Endothelial cell of umbilical vein (primary cell): ENCODE measurements at regions of chr10 and their contacts with region 1.

Region 1: DNA sequence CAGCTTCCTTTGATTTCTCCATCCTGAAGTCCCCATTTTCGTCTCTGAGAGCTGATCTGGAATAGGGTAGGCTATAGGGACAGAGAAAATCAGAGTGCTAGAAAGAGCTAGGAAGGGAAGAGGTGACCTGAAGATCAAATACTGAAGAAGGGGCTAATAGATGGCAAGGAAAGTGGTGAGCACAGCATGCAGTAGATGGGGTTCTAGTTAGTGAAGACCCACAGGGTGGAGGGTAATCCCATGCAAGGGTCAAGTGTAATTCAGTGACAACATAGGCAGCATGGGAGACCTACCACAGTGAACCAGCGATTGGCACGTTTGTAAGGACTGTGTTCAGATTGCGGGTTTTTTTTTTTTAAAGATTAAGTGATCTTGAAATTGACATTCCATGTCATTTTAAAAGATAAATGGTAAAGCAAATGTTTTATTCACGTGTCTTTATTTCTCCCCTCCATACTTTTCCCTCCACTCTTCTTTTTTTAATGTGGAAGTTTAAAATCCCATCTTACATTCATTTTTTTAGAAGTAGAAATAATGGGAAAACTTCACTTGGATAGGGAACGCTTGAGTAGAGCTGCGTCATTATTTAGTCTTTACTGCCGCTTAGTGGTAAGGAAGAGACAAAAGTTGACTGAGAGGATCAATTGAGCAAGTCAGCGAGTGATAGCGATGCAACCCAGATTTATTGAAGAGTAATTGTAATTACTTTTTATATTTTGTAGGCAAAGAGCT is 21.0 kb upstream of the ABI1 start:
- DNase-seq: peak; percentile 65
- H3K4me3 ChIP-seq: no peak overlapping the region
- H3K27ac ChIP-seq: no peak overlapping the region
- H3K4me1 ChIP-seq: no peaks in the 10 kb centered on the region
- H3K27me3 ChIP-seq: peaks cover 5 to 9% of the 10 kb centered on the region in 2 experiments
- CTCF ChIP-seq: peak; percentile 52 to 61
- POLR2A ChIP-seq: no peak

Region 2: DNA sequence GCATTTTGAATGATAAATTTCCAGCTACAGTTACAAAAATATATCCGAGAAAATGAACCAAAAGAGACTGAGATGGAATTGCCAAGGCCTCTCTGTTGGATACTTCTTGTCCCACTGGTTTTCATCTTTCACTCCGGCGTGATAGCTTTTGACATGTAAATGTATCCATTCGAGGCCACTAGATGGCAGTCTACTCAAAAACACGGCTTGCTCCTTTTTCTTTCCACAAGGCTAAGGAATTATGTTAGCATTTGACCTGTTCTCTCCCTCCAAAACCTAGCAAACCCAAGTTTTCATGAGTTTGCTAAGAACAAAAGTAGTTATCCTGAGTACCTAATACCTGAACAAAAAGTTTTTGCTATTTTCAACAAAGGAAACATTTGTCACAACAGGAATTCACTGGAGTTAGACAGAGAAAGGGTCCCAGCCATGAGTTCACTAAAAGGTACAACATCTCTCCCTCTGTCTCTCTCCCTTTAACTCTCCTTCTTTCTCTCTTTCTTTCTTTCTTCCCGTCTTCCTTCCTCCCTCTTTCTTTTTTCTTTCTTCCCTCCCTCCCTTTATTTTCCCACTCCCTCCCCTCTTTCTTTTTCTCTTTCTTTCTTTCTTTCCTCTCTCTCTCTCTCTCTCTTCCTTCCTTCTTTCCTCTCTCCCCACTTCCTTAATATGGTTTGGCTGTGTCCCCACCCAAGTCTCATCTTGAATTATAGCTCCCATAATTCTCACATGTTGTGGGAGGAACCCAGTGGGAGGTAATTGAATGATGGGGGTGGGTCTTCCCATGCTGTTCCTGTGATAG is 1155.6 kb before region 1 on chr10:
- CTCF ChIA-PET with region 1: no interaction called
- POLR2A ChIA-PET with region 1: no interaction called
- dilution Hi-C with region 1: no loop called
- intact Hi-C with region 1: loop called (anchors 5 kb)
- DNase-seq: peak; percentile 42
- H3K4me3 ChIP-seq: no peak overlapping the region
- H3K27ac ChIP-seq: no peak overlapping the region
- H3K4me1 ChIP-seq: no peaks in the 10 kb centered on the region
- H3K27me3 ChIP-seq: no peaks in the 10 kb centered on the region
- CTCF ChIP-seq: peak; percentile 61 to 67
- POLR2A ChIP-seq: no peak

Region 3: DNA sequence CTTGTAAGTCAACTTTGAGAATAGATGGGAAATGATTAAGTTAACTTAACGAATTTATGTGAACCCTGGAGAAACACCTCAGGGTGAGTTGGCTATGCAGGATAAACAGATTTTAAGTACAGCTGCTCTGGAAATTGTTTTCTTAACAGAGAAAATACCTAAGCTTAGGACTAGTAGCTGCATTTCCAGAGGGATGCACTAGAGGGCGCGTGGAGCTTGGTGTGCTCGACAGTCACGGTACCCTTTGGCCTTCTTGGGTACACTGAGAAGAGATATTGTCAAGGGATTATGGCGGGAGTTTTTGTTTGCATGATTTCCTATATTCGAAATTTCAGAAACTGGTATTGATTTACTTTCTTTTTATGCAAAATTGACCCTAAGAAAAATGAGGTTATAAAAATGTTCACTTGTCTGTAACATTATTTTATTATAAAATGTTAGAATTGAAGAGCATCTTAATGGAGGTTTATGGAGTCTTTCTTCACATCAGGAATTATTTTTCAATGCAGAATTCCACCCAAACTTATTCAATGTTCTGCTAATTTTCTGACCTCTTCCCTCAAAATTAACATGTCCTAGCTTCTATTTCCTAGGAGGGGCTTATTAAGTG is 1006.1 kb before region 1 on chr10:
- CTCF ChIA-PET with region 1: interaction called, 20 read pairs
- POLR2A ChIA-PET with region 1: no interaction called
- dilution Hi-C with region 1: no loop called
- intact Hi-C with region 1: loop called (anchors 5 kb)
- DNase-seq: peak; percentile 47
- H3K4me3 ChIP-seq: no peak overlapping the region
- H3K27ac ChIP-seq: no peak overlapping the region
- H3K4me1 ChIP-seq: no peaks in the 10 kb centered on the region
- H3K27me3 ChIP-seq: no peaks in the 10 kb centered on the region
- CTCF ChIP-seq: peak; percentile 80 to 81
- POLR2A ChIP-seq: no peak

Region 4: GRCh38 chr10:26612151-26612915 is 269.4 kb before region 1 on chr10:
- CTCF ChIA-PET with region 1: interaction called, 38 read pairs
- POLR2A ChIA-PET with region 1: no interaction called
- dilution Hi-C with region 1: no loop called
- intact Hi-C with region 1: no loop called
- DNase-seq: no peak
- H3K4me3 ChIP-seq: no peak overlapping the region
- H3K27ac ChIP-seq: no peak overlapping the region
- H3K4me1 ChIP-seq: no peaks in the 10 kb centered on the region
- H3K27me3 ChIP-seq: no peaks in the 10 kb centered on the region
- CTCF ChIP-seq: no peak
- POLR2A ChIP-seq: no peak

Region 5: GRCh38 chr10:26682931-26683330 is 198.8 kb before region 1 on chr10:
- CTCF ChIA-PET with region 1: interaction called, 32 read pairs
- POLR2A ChIA-PET with region 1: no interaction called
- dilution Hi-C with region 1: no loop called
- intact Hi-C with region 1: loop called (anchors 1 kb)
- DNase-seq: no peak
- H3K4me3 ChIP-seq: no peak overlapping the region
- H3K27ac ChIP-seq: no peak overlapping the region
- H3K4me1 ChIP-seq: peaks cover 2% of the 10 kb centered on the region
- H3K27me3 ChIP-seq: peaks cover 0 to 2% of the 10 kb centered on the region in 2 experiments
- CTCF ChIP-seq: no peak
- POLR2A ChIP-seq: no peak

Region 6: DNA sequence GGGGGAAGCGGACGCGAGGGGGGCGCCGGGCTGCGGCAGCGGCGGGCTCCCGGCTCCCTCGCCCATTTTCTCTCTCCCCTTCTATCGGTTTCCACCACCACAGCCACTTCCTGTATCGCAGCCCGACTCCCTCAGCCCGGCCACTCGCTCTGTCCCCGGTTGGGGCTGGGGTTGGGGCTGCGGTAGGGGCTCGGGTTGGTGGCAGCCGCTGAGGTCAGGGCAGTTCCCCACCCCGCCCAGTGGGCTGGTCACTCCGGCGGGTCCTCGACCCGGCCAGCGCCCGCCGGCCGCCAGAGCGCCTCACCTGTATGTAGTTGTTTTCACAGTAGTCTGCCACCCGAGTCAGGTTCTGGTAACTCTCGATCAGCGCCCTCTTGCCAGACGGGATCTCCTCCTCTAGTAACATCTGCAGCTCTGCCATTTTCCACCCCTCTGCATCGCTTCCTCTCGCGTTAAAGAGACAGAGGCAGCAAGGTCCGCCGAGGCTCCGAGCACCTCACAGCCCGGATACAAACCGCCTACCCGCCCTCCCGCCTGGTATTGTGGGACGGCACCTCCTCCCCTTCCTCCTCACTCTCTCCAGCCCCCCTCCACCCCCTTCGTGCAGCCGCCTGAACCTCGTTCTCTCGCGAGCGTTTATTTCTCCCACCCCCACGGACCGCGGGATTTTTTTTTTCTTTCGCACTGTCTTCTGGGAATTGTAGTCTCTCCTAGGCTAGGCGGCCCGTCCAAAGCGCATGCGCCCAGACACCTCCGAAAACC is 21.1 kb before region 1 on chr10 and contains the start of gene ABI1:
- CTCF ChIA-PET with region 1: interaction called, 16 read pairs
- POLR2A ChIA-PET with region 1: interaction called, 7 read pairs
- dilution Hi-C with region 1: no loop called
- intact Hi-C with region 1: loop called (anchors 1 kb)
- DNase-seq: peak; percentile 100
- H3K4me3 ChIP-seq: peak within 1 kb of the TSS; percentile 99
- H3K27ac ChIP-seq: peak within 1 kb of the TSS; percentile 78
- H3K4me1 ChIP-seq: peaks cover 13% of the 10 kb centered on the region
- H3K27me3 ChIP-seq: peaks cover 8 to 10% of the 10 kb centered on the region in 2 experiments
- CTCF ChIP-seq: no peak
- POLR2A ChIP-seq: peak; percentile 87
- total RNA-seq, gene ABI1: 53.6 and 58.8 TPM in 2 replicates

Region 7: DNA sequence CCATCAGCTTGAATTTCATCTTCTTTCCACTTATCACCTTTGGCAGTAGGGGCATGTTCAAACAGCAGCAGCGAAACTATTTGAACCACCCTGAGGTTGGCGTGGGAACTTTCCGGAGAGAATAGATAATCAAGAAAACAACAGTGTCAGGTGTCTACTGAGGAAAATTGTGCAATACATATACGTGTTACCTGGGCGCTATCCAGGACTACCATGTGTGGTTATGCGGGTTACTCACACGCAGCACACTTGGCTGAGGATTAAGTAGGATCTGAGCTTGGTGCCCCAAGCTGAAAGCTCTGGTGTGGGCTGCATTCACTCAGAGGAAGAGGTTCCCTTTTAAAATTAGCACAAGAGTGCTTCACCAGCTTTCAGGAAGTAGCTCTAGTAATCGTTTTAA is 12.2 kb before region 1 on chr10:
- CTCF ChIA-PET with region 1: interaction called, 16 read pairs
- POLR2A ChIA-PET with region 1: interaction called, 7 read pairs
- dilution Hi-C with region 1: no loop called
- intact Hi-C with region 1: no loop called
- DNase-seq: no peak
- H3K4me3 ChIP-seq: no peak overlapping the region
- H3K27ac ChIP-seq: no peak overlapping the region
- H3K4me1 ChIP-seq: no peaks in the 10 kb centered on the region
- H3K27me3 ChIP-seq: peaks cover 6 to 11% of the 10 kb centered on the region in 2 experiments
- CTCF ChIP-seq: no peak
- POLR2A ChIP-seq: no peak